Heart left ventricle (tissue), 16 donors: ENCODE measurements at regions of chr1 and their contacts with region 1.

Region 1: DNA sequence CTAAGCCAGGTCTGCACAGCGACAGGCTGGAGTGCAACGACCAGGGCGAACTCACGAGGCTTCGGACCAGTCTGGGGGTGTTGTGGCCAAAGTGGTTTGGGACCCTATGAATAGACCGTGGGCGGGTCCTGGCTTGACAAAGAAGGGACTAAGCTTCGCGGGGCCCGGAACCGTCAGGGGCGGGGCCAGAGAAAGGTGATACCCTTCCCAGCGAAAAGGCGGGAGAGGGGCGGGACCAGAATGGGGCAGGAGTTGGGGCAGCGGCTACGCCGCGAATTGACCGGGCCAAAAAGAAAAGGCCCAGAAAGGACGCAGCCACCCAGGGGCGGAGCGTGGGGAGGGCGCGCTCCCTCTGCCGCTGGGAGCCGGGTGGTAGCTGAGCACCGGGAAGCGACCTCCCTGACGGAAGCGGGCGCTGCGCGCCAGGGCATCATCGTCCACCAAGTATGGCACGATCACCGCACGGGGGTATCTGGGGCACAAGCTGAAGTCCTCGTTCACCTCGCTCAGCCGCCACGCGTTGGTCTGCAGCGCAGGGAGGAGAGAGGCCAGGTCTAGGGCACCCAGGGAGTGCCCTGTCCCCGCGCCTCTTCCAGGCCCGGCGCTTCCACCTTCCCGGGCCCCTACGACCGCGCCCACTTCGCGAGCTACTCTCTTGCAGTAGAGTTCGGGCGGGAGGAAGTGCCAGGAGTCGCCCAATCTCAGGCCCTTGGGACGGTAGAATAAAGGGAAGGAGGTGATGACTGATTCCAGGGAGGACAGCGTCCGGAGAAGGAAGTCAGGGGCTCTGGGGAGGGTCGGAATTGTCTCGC is 6.7 kb upstream of the FAM167B start:
- DNase-seq: peak; percentile 71 to 80 (median 78)
- ATAC-seq: peak; percentile 37 to 83 (median 73)
- H3K4me3 ChIP-seq: peak overlapping the region; percentile 34 to 85 (median 69)
- H3K27ac ChIP-seq: peak overlapping the region; percentile 63 to 92 (median 86)
- H3K4me1 ChIP-seq: peaks cover 2 to 42% (median 19%) of the 10 kb centered on the region in 12 donors
- H3K27me3 ChIP-seq: no peaks in the 10 kb centered on the region
- CTCF ChIP-seq: peak in 10 of 12 donors; percentile 18 to 55 (median 27)
- POLR2A ChIP-seq: peak in 1 of 2 donors; percentile 60

Region 2: DNA sequence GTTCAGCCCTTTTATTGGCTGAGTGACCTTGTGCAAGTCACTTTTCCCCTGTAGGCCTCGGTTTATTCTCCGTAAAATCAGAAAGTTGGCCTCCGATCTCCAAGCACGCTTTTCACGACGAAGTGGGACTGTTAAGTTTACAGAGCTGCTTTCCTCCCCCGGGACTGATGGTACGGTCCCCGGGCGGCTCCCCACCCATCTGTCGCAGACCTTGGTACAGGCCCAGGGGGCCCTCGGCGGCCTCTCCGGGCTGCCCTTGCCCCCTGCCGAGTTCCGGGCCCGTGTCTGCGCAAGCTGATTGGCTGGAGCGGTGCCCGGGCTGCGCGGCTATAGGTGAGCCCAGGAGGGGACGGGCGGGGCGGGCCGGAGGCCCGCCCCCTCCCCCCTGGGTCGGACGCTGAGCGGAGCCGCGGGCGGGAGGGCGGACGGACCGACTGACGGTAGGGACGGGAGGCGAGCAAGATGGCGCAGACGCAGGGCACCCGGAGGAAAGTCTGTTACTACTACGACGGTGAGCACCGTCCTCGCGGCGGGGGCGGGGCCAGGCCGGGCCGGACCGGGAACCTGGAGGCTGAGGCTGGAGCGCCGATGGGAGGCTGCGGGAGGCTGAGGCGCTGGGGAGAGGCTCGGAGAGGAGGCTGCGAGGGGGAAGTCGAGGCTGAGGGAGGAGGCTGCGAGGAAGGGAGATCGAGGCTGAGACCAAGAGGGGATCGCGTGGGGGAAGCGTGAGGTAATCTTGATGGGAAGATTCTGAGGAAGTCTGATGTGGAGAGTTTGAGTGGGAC is 51.6 kb after region 1 on chr1 and contains the start of gene HDAC1:
- intact Hi-C with region 1: loop called in 3 of 10 experiments (anchors 5 kb)
- DNase-seq: peak; percentile 96 to 99 (median 98)
- ATAC-seq: peak; percentile 98 to 99 (median 99)
- H3K4me3 ChIP-seq: peak within 1 kb of the TSS; percentile 50 to 92 (median 72)
- H3K27ac ChIP-seq: peak within 1 kb of the TSS; percentile 61 to 93 (median 82)
- H3K4me1 ChIP-seq: peaks cover 0 to 34% (median 12%) of the 10 kb centered on the region in 12 donors
- H3K27me3 ChIP-seq: no peaks in the 10 kb centered on the region
- CTCF ChIP-seq: peak in 1 of 12 donors; percentile 5
- POLR2A ChIP-seq: peak in 1 of 2 donors; percentile 51
- total RNA-seq, gene HDAC1: 22.0 to 46.6 (median 29.3) TPM

Region 3: DNA sequence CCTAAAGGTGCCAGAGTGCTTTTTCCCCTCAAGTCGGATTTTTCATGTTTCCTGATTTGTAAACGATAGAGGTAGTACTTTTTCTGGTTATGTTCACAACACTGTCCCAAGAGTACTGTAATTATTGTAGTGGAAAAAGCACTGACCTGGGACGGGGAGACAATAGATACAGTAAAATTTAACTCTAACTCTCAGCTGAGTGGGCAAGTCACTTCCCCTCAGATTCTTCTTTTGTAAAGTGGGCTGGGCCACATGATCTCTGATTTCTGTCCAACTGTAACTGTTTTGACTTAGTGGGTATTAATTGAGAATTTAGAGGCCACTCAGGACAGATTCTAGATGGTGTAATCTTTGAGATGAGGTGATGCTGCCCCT is 76.5 kb after region 1 on chr1:
- intact Hi-C with region 1: loop called in 4 of 10 experiments (anchors 5 to 10 kb)
- DNase-seq: no peak
- ATAC-seq: no peak
- H3K4me3 ChIP-seq: no peak overlapping the region
- H3K27ac ChIP-seq: no peak overlapping the region
- H3K4me1 ChIP-seq: peaks cover 0 to 14% (median 6%) of the 10 kb centered on the region in 12 donors
- H3K27me3 ChIP-seq: no peaks in the 10 kb centered on the region
- CTCF ChIP-seq: no peak
- POLR2A ChIP-seq: no peak